ENCODE measurements at regions of chr20 and their contacts with region 1.

Region 1: GRCh38 chr20:48657475-48658470 is 170.0 kb downstream of the PREX1 start:
- DNase-seq: peak in 9 of 10 donors; percentile 71 to 96 (median 80)

Region 2: DNA sequence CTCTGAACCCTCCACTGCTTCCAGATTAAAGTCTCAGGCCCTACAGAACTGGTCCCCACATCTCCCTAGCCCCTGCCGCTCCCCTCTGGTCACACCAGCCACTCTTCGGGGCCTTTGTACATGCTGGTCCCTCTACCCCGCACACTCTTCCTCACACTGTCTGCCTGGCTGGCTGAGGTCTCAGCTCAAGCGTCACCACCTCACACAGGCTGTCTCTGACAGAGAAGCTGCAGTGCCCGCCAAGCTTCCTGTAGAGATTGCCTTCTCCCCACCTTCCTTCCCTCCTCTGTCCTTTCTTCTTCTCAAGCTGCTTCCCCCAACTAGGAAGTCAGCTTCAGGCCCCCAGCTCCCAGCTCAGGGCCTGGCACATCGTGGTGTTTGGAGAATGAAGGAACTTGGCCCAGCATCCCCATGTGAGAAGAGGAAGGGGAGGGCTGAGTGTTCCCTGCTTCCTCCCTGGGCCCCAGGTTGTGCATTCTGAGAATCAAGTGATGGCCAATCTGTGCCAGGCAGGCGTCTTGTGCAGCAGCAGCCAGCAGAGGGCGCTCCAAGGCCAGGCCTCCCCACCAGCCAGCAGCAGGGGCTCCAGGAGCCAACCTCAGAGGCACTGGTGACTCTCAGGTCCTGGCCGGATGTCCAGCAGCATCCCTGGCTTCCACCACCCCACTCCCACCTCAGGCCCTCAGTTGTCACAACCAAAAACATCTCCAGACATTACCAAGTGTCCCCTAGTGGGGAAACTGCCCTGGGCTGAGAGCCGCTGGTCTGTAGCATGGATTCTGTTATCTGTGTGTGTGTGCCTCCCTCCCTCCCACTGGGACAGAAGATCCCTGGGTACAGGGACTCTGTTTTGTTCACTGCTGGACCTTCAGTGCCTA is 22.1 kb before region 1 on chr20:
- intact Hi-C with region 1: loop called (anchors 2 kb)
- DNase-seq: peak; percentile 57 to 97 (median 85)

Region 3: GRCh38 chr20:48725226-48725991 is 67.6 kb after region 1 on chr20:
- intact Hi-C with region 1: loop called (anchors 5 kb)
- DNase-seq: peak in 2 of 10 donors; percentile 48 to 61

Region 4: DNA sequence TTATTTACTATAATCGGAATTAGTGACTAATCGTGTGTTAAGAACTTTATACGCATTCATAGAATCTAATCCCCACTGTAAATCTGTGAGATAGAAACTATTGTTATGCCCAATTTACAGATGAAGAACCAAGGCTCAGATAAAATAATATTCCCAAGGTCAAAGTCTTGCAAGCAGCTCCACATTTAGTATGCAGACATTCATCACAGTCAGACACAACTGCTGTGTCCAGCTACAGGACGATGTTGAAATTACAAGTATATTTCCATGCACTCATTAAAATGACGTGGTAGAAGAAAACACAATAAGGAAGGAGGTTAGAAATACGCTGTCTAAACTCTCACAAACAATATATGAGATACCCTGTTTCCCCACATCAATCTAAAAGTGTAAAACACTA is 87.6 kb after region 1 on chr20:
- intact Hi-C with region 1: loop called (anchors 1 kb)
- DNase-seq: no peak

Region 5: DNA sequence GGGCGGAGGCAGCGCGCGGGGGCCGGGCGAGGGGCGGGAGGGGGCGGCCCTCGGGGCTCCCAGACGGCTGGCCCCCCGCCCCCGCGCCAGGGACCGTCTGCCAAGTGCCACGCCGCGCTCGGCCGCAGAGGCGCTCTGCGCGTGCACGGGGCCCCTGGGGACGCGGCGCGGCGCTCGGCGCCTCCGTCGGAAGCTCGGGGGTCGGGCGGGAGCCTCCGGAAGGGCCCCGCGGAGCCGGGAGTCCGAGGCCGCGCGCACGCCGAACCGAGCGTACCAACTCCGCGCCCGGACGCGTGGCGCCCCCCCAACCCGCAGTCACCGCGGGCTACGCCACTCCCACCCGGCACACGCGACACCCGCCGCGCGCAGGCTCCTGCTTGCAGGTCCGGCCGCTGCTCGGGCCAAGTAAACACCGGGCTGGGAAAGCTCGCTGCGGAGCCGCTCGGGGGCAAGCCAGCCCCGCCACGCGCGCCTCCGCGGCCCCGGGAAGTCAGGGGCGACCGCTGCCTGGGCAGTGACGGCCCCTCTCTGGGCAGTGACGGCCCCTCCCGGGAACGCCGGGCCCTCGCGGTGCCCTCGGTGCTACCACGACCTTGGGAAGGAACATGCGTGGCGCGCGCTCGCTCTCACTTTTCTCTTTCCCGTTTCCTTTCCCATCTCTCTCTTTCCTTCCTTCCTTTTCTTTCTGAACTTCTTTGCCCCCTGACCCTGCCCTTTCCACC is 170.4 kb after region 1 on chr20:
- intact Hi-C with region 1: loop called (anchors 2 kb)
- DNase-seq: peak; percentile 65 to 97 (median 77)

Region 6: GRCh38 chr20:48904365-48905296 is 246.9 kb after region 1 on chr20:
- intact Hi-C with region 1: loop called (anchors 1 kb)
- DNase-seq: peak in 8 of 10 donors; percentile 29 to 91 (median 70)

Measured in posterior cingulate gyrus (tissue), 11 donors.